ENCODE measurements at regions of chr9 and their contacts with region 1.

Region 1: DNA sequence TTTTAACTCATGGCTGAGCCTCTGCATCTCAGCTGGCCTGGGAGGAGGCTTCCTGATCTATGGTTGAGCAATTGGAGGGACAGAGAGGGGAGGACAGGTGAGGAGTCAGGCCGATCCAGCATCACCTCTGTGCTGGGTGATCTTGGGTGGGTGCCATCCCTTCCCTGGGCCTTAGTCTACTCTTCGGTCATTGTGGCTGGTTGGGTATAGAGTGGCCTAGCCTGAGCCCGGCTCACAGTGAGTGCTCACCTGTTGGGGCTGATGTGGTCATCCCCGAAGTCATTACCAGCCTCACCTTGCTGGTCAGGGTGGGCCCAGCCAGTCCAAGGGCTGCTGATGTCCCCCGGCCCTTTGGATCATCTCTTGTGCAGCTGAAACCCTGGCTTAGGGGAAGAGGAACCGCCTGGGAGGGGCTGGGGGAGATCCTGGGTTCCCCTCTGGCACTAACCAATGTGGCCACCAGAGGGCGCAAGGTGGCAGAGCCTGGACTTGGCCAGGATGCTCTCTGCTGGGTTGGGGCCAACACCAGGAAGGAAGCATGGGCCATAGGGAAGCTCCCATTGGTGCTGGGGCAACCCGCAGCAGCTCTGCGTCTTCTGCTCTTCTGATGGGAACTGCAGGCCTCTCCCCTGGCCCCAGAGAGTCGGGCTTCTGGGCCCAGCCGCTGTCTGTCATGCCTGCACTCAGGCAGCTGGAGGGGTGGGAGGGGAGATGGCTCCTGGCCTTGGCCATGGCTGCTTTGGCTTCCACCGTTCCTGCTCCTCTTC is 17.3 kb upstream of the ODF2 start:
- DNase-seq: no peak
- ATAC-seq: peak; percentile 99
- H3K4me3 ChIP-seq: no peak overlapping the region
- H3K27ac ChIP-seq: no peak overlapping the region
- H3K4me1 ChIP-seq: no peaks in the 10 kb centered on the region
- H3K27me3 ChIP-seq: no peaks in the 10 kb centered on the region
- CTCF ChIP-seq: peak; percentile 86 to 96 (median 94)
- EP300 ChIP-seq: no peak
- POLR2A ChIP-seq: no peak
- RAD21 ChIP-seq: peak; percentile 72

Region 2: DNA sequence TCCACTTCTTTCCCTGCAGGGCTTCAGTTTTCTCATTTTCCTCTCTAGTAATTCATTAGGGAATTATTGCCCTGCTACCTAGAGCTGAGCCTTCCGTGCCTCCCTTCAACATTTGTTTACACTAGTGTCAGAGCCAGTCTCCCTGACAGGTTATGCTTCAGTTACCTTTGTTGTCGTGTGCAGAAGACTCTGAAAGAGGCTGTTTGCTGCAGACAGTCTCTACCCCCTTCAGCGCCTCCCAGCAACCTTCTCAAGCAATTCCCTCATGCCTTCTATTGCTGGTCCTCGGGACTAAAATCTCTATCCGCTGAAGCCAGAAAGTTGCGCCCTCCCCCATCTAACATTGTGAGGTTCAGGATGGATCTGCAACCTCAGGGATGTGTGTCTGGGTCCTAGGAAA is 1511.1 kb before region 1 on chr9:
- CTCF ChIA-PET with region 1: no interaction called
- POLR2A ChIA-PET with region 1: no interaction called
- RAD21 ChIA-PET with region 1: no interaction called
- SMC1A ChIA-PET with region 1: no interaction called
- in situ Hi-C with region 1: no loop called
- intact Hi-C with region 1: no loop called
- DNase-seq: no peak
- ATAC-seq: no peak
- H3K4me3 ChIP-seq: no peak overlapping the region
- H3K27ac ChIP-seq: no peak overlapping the region
- H3K4me1 ChIP-seq: peaks cover 9% of the 10 kb centered on the region; the same call in 1 of the 2 replicates
- H3K27me3 ChIP-seq: no peaks in the 10 kb centered on the region
- CTCF ChIP-seq: no peak
- EP300 ChIP-seq: no peak
- POLR2A ChIP-seq: no peak
- RAD21 ChIP-seq: no peak

Region 3: GRCh38 chr9:128448746-128449145 is 10.2 kb after region 1 on chr9:
- CTCF ChIA-PET with region 1: interaction called, 10 read pairs
- POLR2A ChIA-PET with region 1: no interaction called
- RAD21 ChIA-PET with region 1: no interaction called
- SMC1A ChIA-PET with region 1: no interaction called
- in situ Hi-C with region 1: no loop called
- intact Hi-C with region 1: no loop called
- DNase-seq: no peak
- ATAC-seq: no peak
- H3K4me3 ChIP-seq: no peak overlapping the region
- H3K27ac ChIP-seq: no peak overlapping the region
- H3K4me1 ChIP-seq: no peaks in the 10 kb centered on the region
- H3K27me3 ChIP-seq: no peaks in the 10 kb centered on the region; a peak in 1 of 4 replicates
- CTCF ChIP-seq: no peak
- EP300 ChIP-seq: no peak
- POLR2A ChIP-seq: no peak
- RAD21 ChIP-seq: no peak